ENCODE measurements at regions of chr5 and their contacts with region 1.

Region 1: GRCh38 chr5:158709279-158709678 is 390.4 kb downstream of the EBF1 start:
- DNase-seq: no peak
- H3K4me3 ChIP-seq: no peak overlapping the region
- H3K27ac ChIP-seq: no peak overlapping the region
- H3K4me1 ChIP-seq: no peaks in the 10 kb centered on the region
- H3K27me3 ChIP-seq: no peaks in the 10 kb centered on the region
- CTCF ChIP-seq: no peak
- EP300 ChIP-seq: no peak
- POLR2A ChIP-seq: no peak

Region 2: DNA sequence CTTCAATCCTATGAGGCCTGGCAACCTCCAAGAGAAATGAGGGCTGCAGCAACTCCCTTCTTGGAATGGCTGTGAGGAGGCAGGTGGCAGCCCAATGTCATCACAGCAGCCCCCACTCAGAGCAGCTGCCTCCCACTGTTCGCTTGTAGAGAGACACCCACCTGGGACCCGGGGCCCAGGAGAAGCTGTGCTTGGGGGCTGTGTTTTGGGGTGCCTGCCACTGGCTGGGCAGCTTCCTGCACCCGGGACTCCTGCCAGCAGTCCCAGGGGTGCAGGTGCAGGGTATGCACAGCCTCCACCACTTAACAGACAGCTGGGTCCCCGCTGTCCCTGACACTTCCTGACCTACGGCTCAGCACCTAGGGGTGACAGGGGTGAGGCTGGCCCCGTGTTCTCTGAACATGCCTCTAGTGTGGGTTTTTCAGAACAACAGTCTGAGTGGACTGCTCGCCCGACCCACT is 1223.0 kb before region 1 on chr5:
- in situ Hi-C with region 1: no loop called
- intact Hi-C with region 1: loop called (anchors 5 kb)
- DNase-seq: peak; percentile 58
- H3K4me3 ChIP-seq: no peak overlapping the region
- H3K27ac ChIP-seq: peak overlapping the region; percentile 33 to 69 (median 46)
- H3K4me1 ChIP-seq: peaks cover 0 to 8% (median 3%) of the 10 kb centered on the region in 4 donors
- H3K27me3 ChIP-seq: no peaks in the 10 kb centered on the region
- CTCF ChIP-seq: no peak
- EP300 ChIP-seq: no peak
- POLR2A ChIP-seq: no peak

Region 3: DNA sequence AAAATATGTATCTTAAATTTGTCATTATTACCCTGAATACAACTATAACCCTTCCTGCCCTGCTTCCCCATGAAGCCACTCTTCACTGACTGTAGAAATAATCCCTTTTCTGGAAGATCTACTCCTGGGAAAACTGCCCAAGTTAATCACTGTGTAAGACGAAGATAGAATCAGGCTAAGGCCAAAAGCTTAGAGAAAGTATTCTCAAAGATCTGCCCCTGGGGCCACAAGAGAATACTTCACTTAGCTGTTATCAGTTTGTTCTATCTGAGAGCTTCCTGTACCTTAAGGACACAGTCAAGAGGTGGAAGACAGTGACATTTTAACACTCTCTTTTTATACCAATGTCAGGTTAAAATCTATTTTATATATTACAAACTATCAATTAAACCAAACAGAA is 466.3 kb after region 1 on chr5:
- in situ Hi-C with region 1: no loop called
- intact Hi-C with region 1: no loop called
- DNase-seq: no peak
- H3K4me3 ChIP-seq: no peak overlapping the region
- H3K27ac ChIP-seq: no peak overlapping the region
- H3K4me1 ChIP-seq: peaks cover 6 to 30% (median 14%) of the 10 kb centered on the region in 4 donors
- H3K27me3 ChIP-seq: no peaks in the 10 kb centered on the region
- CTCF ChIP-seq: no peak
- EP300 ChIP-seq: no peak
- POLR2A ChIP-seq: no peak

Measured in transverse colon (tissue), 4 donors.